ENCODE measurements at regions of chrX and their contacts with region 1.

Region 1: GRCh38 chrX:10189317-10190268 is 32.8 kb downstream of the CLCN4 start:
- DNase-seq: peak; percentile 74
- ATAC-seq: peak; percentile 49
- H3K4me3 Mint-ChIP-seq: no peak overlapping the region
- H3K27ac Mint-ChIP-seq: no peak overlapping the region
- H3K4me1 Mint-ChIP-seq: no peaks in the 10 kb centered on the region
- H3K27me3 Mint-ChIP-seq: peaks cover 9% of the 10 kb centered on the region

Region 2: GRCh38 chrX:10615931-10616775 is 426.6 kb after region 1 on chrX:
- CTCF ChIA-PET with region 1: interaction called, 15 read pairs
- POLR2A ChIA-PET with region 1: no interaction called
- DNase-seq: peak; percentile 21
- ATAC-seq: no peak
- H3K4me3 Mint-ChIP-seq: no peak overlapping the region
- H3K27ac Mint-ChIP-seq: no peak overlapping the region
- H3K4me1 Mint-ChIP-seq: peaks cover 3% of the 10 kb centered on the region
- H3K27me3 Mint-ChIP-seq: peaks cover 24% of the 10 kb centered on the region

Region 3: GRCh38 chrX:10722851-10723250 is 533.3 kb after region 1 on chrX:
- CTCF ChIA-PET with region 1: interaction called, 26 read pairs
- POLR2A ChIA-PET with region 1: no interaction called
- DNase-seq: peak; percentile 35
- ATAC-seq: no peak
- H3K4me3 Mint-ChIP-seq: no peak overlapping the region
- H3K27ac Mint-ChIP-seq: no peak overlapping the region
- H3K4me1 Mint-ChIP-seq: no peaks in the 10 kb centered on the region
- H3K27me3 Mint-ChIP-seq: no peaks in the 10 kb centered on the region

Region 4: DNA sequence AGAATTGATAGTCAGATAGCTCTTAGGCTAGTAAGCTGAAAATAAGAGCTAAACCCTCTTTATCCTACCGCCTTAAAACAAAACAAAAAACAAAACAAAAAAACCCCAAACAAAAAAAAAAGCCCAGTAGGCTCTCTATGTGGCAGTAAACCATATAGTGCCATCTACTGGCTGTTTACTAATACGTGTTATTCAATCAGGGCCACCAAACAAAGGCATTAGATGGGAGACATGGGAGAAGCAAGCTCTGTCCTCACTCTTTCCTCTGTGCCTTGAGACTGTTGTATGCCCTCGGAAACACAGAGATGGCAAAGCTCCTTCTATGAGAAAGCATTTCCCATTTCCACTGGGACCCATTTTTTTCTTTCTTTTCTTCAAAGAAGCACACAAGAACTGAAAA is 579.6 kb after region 1 on chrX:
- CTCF ChIA-PET with region 1: interaction called, 11 read pairs
- POLR2A ChIA-PET with region 1: no interaction called
- DNase-seq: no peak
- ATAC-seq: no peak
- H3K4me3 Mint-ChIP-seq: no peak overlapping the region
- H3K27ac Mint-ChIP-seq: no peak overlapping the region
- H3K4me1 Mint-ChIP-seq: no peaks in the 10 kb centered on the region
- H3K27me3 Mint-ChIP-seq: no peaks in the 10 kb centered on the region